ENCODE measurements at regions of chr1 and their contacts with region 1.

Region 1: GRCh38 chr1:205791568-205792180 is 16.4 kb upstream of the RAB29 start:
- DNase-seq: peak; percentile 45 to 76
- ATAC-seq: peak; percentile 92

Region 2: DNA sequence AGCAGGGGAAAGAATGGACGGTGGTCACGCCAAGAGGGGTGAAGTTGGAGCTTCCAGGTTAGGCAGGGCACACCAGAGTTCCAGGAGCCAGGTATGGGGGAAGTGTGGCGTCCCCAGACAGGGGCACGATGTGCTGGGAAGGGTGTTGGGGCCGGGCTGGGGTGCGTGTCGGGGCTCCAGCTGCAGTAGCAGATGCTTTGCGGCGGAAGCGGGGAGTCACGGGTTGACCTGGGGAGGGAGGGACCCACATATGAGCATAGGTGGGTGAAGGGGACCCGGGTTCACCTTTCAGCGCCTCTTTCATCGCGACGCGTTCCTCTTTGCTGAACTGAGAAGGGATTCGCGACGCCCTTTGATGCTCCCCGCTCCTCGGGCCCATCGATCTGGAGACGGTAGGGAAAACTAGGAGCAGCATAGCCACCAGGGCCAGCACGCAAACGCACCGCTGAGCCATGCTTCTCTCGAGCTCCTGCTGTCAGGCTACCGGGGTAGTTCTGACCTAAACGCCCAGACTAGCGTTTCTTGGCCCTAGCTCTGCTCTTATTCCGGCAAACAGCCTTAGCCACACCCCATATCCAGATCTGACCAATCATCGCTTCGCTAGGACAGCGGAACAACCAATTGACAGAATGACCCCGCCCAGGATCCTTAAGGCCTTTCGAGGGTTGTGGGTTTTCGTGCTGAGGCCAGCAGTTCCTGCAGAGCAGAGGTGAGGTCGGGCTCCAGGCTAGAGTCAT is 58.1 kb after region 1 on chr1 and contains the start of gene PM20D1:
- intact Hi-C with region 1: no loop called
- DNase-seq: peak; percentile 70 to 79
- ATAC-seq: peak; percentile 97
- total RNA-seq, gene PM20D1: 0.17 TPM in 1 of 2 donors, not detected in the other

Region 3: GRCh38 chr1:205907794-205908193 is 116.1 kb after region 1 on chr1:
- intact Hi-C with region 1: loop called in 1 of 2 experiments (anchors 5 kb)
- DNase-seq: peak in 1 of 2 donors; percentile 22
- ATAC-seq: peak; percentile 56

Region 4: GRCh38 chr1:205977402-205978014 is 185.8 kb after region 1 on chr1:
- intact Hi-C with region 1: loop called (anchors 5 kb)
- DNase-seq: peak; percentile 56 to 60
- ATAC-seq: peak; percentile 82

Region 5: DNA sequence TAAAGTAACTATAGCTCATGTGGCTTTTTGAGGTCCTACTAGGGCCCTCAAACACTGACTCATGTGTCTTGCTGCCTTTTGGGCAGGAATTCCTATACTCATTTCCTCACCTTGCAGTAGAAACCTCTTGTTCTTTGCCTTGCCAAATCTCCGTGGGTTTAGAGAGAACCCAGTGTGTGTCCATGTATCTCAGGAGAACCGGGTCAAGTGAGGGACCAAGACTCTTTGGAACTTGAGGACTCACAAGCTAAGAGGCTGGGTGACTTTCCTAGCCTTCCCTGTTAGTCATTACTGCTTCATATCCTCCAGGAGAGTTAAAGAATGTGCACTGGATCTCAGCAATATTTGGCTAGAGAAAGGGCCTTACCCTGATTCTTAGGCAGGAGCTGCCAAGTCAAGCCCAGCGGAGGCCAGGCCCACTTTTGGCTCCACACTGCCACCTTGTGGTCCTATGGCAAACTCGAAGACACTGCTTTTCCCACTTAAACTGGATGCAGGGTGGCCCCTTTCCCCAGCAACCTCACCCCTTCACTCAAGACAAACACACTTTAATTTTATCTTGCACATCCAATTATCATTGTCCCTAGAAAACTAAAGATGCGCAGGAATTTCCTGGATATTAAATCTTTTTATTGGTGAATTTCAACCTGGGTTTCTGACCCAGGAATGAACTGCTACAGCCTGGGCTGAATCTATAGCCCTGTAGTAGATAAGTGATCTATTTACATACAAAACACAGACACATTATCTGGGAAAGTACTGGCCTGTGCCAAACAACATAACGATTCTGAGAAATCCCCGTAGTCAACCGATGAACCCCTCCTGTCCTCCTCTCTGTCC is 314.9 kb after region 1 on chr1:
- intact Hi-C with region 1: loop called in 1 of 2 experiments (anchors 10 kb)
- DNase-seq: peak; percentile 58 to 85
- ATAC-seq: peak; percentile 83